ENCODE measurements at regions of chr11 and their contacts with region 1.

Region 1: GRCh38 chr11:61967116-61967923 is at the start of gene FTH1:
- DNase-seq: peak; percentile 78
- ATAC-seq: peak; percentile 59
- H3K4me3 ChIP-seq: peak within 1 kb of the TSS; percentile 92 to 99 (median 96)
- H3K27ac ChIP-seq: peak within 1 kb of the TSS; percentile 99
- H3K4me1 ChIP-seq: peaks cover 71% of the 10 kb centered on the region
- H3K27me3 ChIP-seq: no peaks in the 10 kb centered on the region; a peak in 1 of 5 replicates
- CTCF ChIP-seq: peak; percentile 6; the same call in 1 of the 2 replicates
- EP300 ChIP-seq: no peak; a peak in 1 of 4 replicates
- POLR2A ChIP-seq: peak; percentile 90 to 95
- RAD21 ChIP-seq: 0 out of 2 replicates have a peak, but pooled peaks have one; percentile 59
- total RNA-seq, gene FTH1: 544 and 607 TPM in 2 replicates

Region 2: GRCh38 chr11:61923166-61924063 is 43.9 kb before region 1 on chr11:
- CTCF ChIA-PET with region 1: no interaction called
- POLR2A ChIA-PET with region 1: interaction called, 23 read pairs
- in situ Hi-C with region 1: no loop called
- intact Hi-C with region 1: no loop called
- DNase-seq: peak; percentile 87
- ATAC-seq: peak; percentile 93
- H3K4me3 ChIP-seq: peak overlapping the region; percentile 27 to 66 (median 42)
- H3K27ac ChIP-seq: peak overlapping the region; percentile 75
- H3K4me1 ChIP-seq: peaks cover 48% of the 10 kb centered on the region
- H3K27me3 ChIP-seq: peaks cover 6 to 24% of the 10 kb centered on the region in 2 experiments
- CTCF ChIP-seq: peak; percentile 30; the same call in 1 of the 2 replicates
- EP300 ChIP-seq: peak in 1 of 2 experiments; percentile 59; a peak in 1 of 4 replicates
- POLR2A ChIP-seq: peak; percentile 38 to 63; a peak in 2 of 4 replicates
- RAD21 ChIP-seq: no peak

Region 3: GRCh38 chr11:61978703-61979661 is 11.7 kb after region 1 on chr11:
- CTCF ChIA-PET with region 1: no interaction called
- POLR2A ChIA-PET with region 1: interaction called, 188 read pairs
- in situ Hi-C with region 1: no loop called
- intact Hi-C with region 1: loop called (anchors 1 kb)
- DNase-seq: no peak
- ATAC-seq: no peak
- H3K4me3 ChIP-seq: no peak overlapping the region
- H3K27ac ChIP-seq: peak overlapping the region; percentile 19
- H3K4me1 ChIP-seq: peaks cover 99% of the 10 kb centered on the region
- H3K27me3 ChIP-seq: no peaks in the 10 kb centered on the region
- CTCF ChIP-seq: no peak
- EP300 ChIP-seq: no peak
- POLR2A ChIP-seq: no peak
- RAD21 ChIP-seq: no peak

Region 4: GRCh38 chr11:62018981-62019664 is 51.8 kb after region 1 on chr11:
- CTCF ChIA-PET with region 1: no interaction called
- POLR2A ChIA-PET with region 1: interaction called, 59 read pairs
- in situ Hi-C with region 1: no loop called
- intact Hi-C with region 1: no loop called
- DNase-seq: no peak
- ATAC-seq: peak; percentile 56
- H3K4me3 ChIP-seq: no peak overlapping the region
- H3K27ac ChIP-seq: peak overlapping the region; percentile 57
- H3K4me1 ChIP-seq: peaks cover 63% of the 10 kb centered on the region
- H3K27me3 ChIP-seq: no peaks in the 10 kb centered on the region
- CTCF ChIP-seq: no peak
- EP300 ChIP-seq: no peak
- POLR2A ChIP-seq: no peak
- RAD21 ChIP-seq: no peak

Region 5: DNA sequence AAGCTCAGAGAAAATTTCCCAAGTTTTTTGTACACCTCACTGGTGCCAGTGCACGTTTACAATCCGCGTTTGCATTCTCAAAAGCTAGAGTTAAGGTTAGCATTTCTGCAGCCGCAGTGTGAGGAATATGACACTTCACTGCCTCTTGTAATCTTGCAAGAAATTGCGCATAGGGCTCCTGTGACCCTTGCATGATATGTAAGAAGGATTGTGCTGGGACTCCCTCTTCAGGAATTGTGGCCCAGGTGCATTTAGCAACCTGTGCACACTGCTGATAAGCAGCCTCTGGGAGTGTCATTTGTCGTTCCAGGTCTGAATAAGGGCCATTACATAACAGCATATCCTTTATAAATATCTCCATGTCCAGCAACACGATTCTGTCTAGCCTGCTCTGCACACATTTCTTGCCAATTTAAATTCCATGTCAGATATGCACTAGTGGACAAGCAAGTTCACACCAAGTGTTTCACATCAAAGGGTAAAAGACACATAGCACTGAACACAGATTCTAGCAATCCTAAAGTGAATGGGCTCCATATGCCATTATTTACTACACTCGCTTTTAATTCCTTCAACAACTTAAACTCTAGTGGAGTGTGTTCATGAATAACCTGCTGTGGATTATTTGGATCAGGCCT is 87.3 kb after region 1 on chr11:
- CTCF ChIA-PET with region 1: no interaction called
- POLR2A ChIA-PET with region 1: interaction called, 29 read pairs
- in situ Hi-C with region 1: no loop called
- intact Hi-C with region 1: loop called (anchors 2 kb)
- DNase-seq: peak; percentile 78
- ATAC-seq: peak; percentile 66; the same call in 2 of the 3 replicates
- H3K4me3 ChIP-seq: no peak overlapping the region
- H3K27ac ChIP-seq: no peak overlapping the region
- H3K4me1 ChIP-seq: peaks cover 27% of the 10 kb centered on the region
- H3K27me3 ChIP-seq: peaks cover 0 to 3% of the 10 kb centered on the region in 2 experiments; a peak in 2 of 5 replicates
- CTCF ChIP-seq: peak; percentile 91
- EP300 ChIP-seq: no peak
- POLR2A ChIP-seq: no peak
- RAD21 ChIP-seq: peak; percentile 82

Measured in HepG2 (cell line).